ENCODE measurements at regions of chr13 and their contacts with region 1.

Region 1: GRCh38 chr13:39952249-39953233 is 297.1 kb downstream of the COG6 start:
- DNase-seq: no peak
- ATAC-seq: peak; percentile 46
- H3K4me3 Mint-ChIP-seq: no peak overlapping the region
- H3K27ac Mint-ChIP-seq: peak overlapping the region; percentile 57
- H3K4me1 Mint-ChIP-seq: peaks cover 30% of the 10 kb centered on the region
- H3K27me3 Mint-ChIP-seq: no peaks in the 10 kb centered on the region
- CTCF ChIP-seq: no peak

Region 2: GRCh38 chr13:40026174-40026585 is 73.6 kb after region 1 on chr13:
- CTCF ChIA-PET with region 1: no interaction called
- POLR2A ChIA-PET with region 1: no interaction called
- intact Hi-C with region 1: loop called (anchors 5 kb)
- DNase-seq: no peak
- ATAC-seq: peak; percentile 79
- H3K4me3 Mint-ChIP-seq: peak overlapping the region; percentile 20
- H3K27ac Mint-ChIP-seq: no peak overlapping the region
- H3K4me1 Mint-ChIP-seq: peaks cover 16% of the 10 kb centered on the region
- H3K27me3 Mint-ChIP-seq: no peaks in the 10 kb centered on the region
- CTCF ChIP-seq: no peak